ENCODE measurements at regions of chr20 and their contacts with region 1.

Region 1: DNA sequence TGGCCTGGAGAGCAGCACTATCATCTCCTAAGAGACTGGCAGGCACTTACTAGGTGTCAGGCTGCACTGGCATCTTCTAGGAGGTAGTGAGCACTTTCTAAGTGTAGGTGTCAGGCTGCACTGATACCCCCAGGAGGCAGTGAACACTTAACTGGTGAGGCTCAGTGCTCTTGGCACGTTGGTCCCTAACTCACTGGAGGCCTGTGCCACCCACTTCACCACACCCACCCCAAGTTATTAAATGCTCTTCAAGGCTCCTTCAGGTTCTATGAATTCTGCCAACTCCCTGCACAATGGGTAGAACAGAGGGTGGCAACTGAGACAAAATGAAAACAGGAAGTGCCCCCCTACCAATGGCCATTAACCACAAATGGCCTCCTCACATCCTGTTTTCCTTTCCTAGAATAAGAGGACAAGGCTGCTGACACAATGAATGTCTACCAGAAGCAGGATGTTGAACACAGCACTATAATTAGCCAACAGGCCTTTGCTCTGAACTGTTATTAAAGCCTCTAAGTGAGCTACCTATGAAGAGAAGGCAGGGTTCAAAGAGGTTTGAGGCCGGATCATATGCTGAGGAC is 29.4 kb downstream of the NCOA5 start:
- DNase-seq: no peak

Region 2: DNA sequence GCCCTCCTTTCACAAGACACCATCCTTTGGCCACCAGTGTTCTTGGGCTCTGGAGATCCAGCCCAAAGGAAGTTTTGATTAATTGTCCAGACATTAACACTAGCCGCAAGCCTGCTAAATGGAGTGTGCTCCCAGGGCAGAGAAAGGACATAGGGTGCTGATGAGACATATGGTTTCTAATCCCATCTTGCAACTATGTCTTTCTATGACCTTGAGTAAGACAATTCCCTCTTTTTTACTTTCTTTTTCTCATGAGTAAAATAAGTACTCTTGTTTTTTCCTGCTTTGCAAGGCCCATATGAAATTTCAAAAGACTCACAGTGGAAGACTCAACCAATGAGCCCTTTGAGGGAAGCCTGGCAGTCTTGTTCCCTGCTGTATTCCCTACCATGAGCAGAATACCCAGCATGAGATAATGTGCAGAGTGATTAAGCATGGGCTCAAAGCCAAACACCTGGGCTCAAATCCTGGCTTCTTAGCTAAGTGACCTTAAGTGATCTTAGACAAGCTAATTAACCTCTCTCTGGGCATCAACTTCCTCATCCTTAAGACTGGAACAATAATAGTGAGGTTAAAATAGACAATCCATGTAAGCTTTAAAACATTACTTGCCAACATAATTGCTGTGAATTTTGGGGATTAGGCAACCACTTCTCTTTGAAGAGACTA is 355.3 kb before region 1 on chr20 and contains the start of gene WFDC10B:
- intact Hi-C with region 1: no loop called
- DNase-seq: no peak

Region 3: GRCh38 chr20:46004889-46005473 is 55.4 kb before region 1 on chr20:
- intact Hi-C with region 1: no loop called
- DNase-seq: no peak

Region 4: DNA sequence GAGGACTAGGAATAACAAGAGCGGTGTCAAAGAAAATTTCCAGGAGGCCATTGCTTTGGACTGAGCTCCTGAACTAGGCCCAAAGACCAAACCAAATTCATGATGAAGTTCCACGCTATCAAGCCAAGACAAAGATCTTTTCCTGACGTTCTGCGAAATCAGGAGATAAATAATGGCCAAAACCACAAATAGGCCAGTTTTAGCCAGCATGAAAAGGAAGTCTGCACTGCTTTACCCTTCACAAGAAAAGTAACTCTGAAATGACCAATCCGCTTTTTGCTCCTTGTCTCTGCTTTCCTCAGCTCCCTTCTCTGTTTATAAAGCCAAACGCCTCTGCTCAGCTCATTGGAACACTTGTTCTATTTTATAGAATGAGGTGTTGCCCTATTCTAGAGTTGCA is 22.7 kb after region 1 on chr20:
- intact Hi-C with region 1: loop called (anchors 2 kb)
- DNase-seq: no peak

Region 5: GRCh38 chr20:46169245-46170171 is 109.1 kb after region 1 on chr20:
- intact Hi-C with region 1: no loop called
- DNase-seq: peak in 1 of 10 donors; percentile 66

Region 6: DNA sequence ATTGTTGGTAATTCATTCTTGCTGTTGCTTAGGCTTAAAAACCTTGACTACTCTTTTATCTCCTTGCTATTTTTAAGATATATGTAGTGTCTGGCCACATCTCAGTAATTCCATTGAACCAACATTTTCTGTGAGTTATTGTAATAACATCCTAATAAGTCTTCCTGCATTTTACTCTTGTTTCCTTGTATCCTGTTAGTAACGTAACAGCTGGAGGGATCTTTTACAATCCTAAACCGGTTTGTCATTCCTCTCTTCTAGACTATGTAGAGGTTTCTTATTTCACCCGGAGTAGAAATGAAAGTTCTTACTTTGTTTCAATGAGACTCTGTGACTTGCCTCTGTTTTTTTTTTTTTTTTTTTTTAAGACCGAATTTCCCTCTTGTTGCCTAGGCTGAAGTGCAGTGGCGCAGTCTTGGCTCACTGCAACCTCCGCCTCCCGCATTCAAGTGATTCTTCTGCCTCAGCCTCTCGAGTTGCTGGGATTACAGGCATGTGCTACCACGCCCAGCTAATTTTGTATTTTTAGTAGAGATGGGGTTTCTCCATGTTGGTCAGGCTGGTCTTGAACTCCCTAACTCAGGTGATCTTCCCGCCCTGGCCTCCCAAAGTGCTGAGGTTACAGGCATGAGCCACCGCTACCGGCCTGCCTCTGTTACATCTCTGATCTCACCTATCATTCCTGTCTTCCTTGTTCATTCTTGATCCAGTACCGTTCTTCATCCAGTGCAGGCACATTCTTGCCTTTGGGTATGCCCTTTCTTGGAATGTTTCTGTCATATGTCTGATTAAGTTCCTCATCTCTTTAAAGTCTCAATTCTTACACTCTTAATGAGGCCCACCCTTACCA is 1486.0 kb after region 1 on chr20:
- intact Hi-C with region 1: no loop called
- DNase-seq: no peak

Measured in posterior cingulate gyrus (tissue), 11 donors.